Activated B cell treated with CpG ODN at 0.5 μM for 24 hours (primary cell): ENCODE measurements at regions of chr11 and their contacts with region 1.

Region 1: DNA sequence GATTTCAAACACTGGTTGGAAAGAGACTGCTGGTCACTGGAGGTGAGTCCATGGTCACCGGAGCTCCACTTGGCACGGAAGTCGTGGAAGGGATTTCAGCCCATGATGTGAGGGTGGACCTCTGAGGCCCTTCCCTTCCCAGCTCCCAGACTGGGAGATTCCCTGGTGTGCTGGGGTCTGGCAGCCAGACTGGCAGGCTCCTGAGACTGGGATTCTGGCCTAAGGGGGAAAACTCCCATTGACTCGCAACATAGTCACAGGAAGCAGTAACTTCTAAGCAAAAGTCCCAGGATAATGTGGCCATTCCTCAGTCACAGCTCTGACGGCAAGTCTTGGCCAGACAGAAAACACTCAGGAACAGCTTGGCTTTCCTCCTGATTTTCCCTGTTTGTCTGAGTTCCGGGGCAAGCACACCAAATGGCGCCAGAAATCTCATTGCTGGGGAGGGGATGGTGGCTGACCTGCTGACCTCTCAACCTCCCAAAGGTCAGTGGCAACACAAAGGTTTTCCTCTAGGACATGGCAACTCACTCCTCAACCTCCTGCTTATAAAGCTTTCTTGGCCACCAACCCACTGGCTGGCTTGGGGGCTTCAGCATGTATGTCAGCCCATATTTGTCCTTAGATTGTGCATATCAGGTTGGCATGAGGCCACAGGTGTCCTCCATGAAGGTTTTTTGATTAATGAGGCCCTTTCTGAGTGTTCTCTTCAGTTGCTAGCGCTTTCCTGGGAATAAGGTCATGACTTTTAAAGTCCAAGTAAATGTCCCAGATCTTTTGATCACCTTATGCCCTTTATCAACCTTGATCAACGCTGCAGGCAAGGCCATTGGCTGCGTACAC is 99.5 kb downstream of the CCDC81 start:
- DNase-seq: no peak
- ATAC-seq: no peak
- H3K4me3 Mint-ChIP-seq: no peak overlapping the region
- H3K27ac Mint-ChIP-seq: no peak overlapping the region
- H3K4me1 Mint-ChIP-seq: no peaks in the 10 kb centered on the region
- H3K27me3 Mint-ChIP-seq: no peaks in the 10 kb centered on the region
- CTCF ChIP-seq: no peak

Region 2: DNA sequence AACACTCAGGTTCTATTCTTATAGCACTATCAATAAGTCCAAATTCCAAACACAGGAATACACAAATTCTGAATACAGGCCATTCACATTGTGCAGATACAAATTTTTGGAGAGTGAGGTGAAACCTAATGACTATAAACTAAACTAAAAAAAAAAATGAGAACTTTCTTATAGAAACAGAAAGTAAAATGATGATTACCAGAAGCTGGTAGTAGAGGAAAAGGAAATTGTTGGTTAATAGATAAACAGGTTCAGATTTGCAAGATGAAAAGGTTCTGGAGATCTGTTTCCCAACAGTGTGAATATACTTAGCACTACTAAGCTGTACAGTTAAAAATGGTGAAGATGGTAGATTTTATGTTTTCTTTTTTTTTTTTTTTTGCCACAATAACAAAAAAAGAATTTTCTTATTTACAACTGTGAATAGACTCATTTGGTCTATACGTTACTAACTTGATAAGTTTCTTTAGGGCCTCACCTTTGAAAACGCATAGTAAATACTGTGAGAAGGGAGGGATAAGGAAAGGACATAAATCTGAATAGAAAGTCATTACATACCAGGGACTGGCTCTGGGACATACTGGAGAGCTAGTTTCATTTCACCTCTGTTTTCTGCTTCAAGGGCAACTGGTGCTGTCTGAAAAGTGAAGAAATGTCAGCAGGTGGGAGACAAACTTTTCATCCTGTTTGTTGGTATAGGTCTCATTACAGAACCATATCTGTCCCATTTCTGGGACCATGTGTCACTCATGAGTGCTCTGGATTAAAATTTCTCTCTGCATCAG is 774.1 kb before region 1 on chr11:
- CTCF ChIA-PET with region 1: no interaction called
- POLR2A ChIA-PET with region 1: interaction called, 10 read pairs
- intact Hi-C with region 1: no loop called
- DNase-seq: no peak
- ATAC-seq: no peak
- H3K4me3 Mint-ChIP-seq: peak overlapping the region; percentile 54
- H3K27ac Mint-ChIP-seq: peak overlapping the region; percentile 10
- H3K4me1 Mint-ChIP-seq: peaks cover 12% of the 10 kb centered on the region
- H3K27me3 Mint-ChIP-seq: peaks cover 4% of the 10 kb centered on the region
- CTCF ChIP-seq: no peak

Region 3: GRCh38 chr11:86408845-86409244 is 65.4 kb before region 1 on chr11:
- CTCF ChIA-PET with region 1: no interaction called
- POLR2A ChIA-PET with region 1: interaction called, 10 read pairs
- intact Hi-C with region 1: no loop called
- DNase-seq: no peak
- ATAC-seq: no peak
- H3K4me3 Mint-ChIP-seq: no peak overlapping the region
- H3K27ac Mint-ChIP-seq: no peak overlapping the region
- H3K4me1 Mint-ChIP-seq: no peaks in the 10 kb centered on the region
- H3K27me3 Mint-ChIP-seq: no peaks in the 10 kb centered on the region
- CTCF ChIP-seq: no peak